ENCODE measurements at regions of chr1 and their contacts with region 1.

Region 1: GRCh38 chr1:248821101-248821500 is 4.6 kb downstream of the SH3BP5L start:
- DNase-seq: peak in 2 of 9 experiments; percentile 6 to 21
- ATAC-seq: no peak
- H3K4me3 ChIP-seq: no peak overlapping the region
- H3K4me3 Mint-ChIP-seq: no peak overlapping the region
- H3K27ac ChIP-seq: no peak overlapping the region
- H3K27ac Mint-ChIP-seq: no peak overlapping the region
- H3K4me1 ChIP-seq: peaks cover 70% of the 10 kb centered on the region
- H3K4me1 Mint-ChIP-seq: peaks cover 89% of the 10 kb centered on the region
- H3K27me3 ChIP-seq: no peaks in the 10 kb centered on the region
- H3K27me3 Mint-ChIP-seq: no peaks in the 10 kb centered on the region
- CTCF ChIP-seq: no peak

Region 2: GRCh38 chr1:247936415-247936814 is 884.7 kb before region 1 on chr1:
- CTCF ChIA-PET with region 1: no interaction called
- POLR2A ChIA-PET with region 1: no interaction called
- intact Hi-C with region 1: loop called in 1 of 2 experiments (anchors 5 kb)
- DNase-seq: peak in 1 of 9 experiments; percentile 2
- ATAC-seq: no peak
- H3K4me3 ChIP-seq: no peak overlapping the region
- H3K4me3 Mint-ChIP-seq: peak overlapping the region; percentile 88
- H3K27ac ChIP-seq: no peak overlapping the region
- H3K27ac Mint-ChIP-seq: no peak overlapping the region
- H3K4me1 ChIP-seq: no peaks in the 10 kb centered on the region
- H3K4me1 Mint-ChIP-seq: no peaks in the 10 kb centered on the region
- H3K27me3 ChIP-seq: no peaks in the 10 kb centered on the region
- H3K27me3 Mint-ChIP-seq: peaks cover 6% of the 10 kb centered on the region
- CTCF ChIP-seq: no peak

Region 3: DNA sequence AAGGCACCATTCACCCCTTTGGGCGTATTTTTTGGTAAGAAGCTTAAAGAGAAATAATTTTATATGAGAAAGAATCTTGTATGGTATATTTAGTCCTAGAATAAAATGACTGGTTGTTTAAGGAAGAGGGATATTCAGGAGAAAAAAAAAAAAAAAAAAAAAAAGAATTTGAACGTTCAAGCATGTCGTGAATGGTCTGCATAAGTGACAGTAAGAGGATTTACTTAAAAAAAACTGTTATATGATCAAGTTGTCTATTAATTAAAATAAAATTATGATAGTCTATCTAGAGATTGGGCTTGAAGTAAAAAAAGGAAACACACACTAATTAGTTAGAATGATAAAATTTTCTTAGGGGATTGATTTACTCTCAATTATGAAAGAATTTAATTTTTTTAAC is 106.9 kb before region 1 on chr1:
- CTCF ChIA-PET with region 1: no interaction called
- POLR2A ChIA-PET with region 1: no interaction called
- intact Hi-C with region 1: no loop called
- DNase-seq: no peak
- ATAC-seq: no peak
- H3K4me3 ChIP-seq: no peak overlapping the region
- H3K4me3 Mint-ChIP-seq: no peak overlapping the region
- H3K27ac ChIP-seq: no peak overlapping the region
- H3K27ac Mint-ChIP-seq: no peak overlapping the region
- H3K4me1 ChIP-seq: no peaks in the 10 kb centered on the region
- H3K4me1 Mint-ChIP-seq: no peaks in the 10 kb centered on the region
- H3K27me3 ChIP-seq: no peaks in the 10 kb centered on the region
- H3K27me3 Mint-ChIP-seq: peaks cover 14% of the 10 kb centered on the region
- CTCF ChIP-seq: no peak

Region 4: DNA sequence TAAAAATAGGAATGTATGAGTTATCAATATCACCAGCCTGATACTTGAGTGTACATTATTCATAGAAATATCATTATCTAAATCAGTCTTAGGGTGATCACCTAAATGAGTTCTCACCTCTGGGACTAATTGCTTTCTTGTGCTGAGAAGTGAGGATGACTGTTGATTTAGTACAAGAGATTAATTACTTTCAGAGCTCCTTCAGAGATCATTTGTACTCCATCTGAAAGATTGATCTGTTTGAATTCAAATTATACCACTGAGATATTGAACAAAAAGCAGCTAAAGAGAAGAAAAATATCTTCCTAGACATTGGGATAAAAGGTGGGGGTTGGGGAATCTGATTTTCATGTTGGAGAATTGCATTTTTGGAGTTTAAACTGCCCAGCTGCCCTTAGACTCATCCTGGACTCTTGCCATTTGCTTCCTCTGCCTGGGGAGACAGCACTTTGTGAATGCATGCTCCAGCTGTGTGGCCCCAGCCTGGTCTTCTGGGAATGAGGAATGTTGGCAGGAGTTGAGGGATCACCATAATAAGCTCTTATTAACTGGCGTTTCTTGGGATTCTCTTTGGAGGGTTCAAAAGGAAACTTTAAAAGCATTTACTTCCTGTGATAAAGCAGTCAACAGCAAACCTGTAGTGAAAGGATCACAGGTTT is 65.3 kb after region 1 on chr1:
- CTCF ChIA-PET with region 1: no interaction called
- POLR2A ChIA-PET with region 1: no interaction called
- intact Hi-C with region 1: no loop called
- DNase-seq: no peak
- ATAC-seq: no peak
- H3K4me3 ChIP-seq: no peak overlapping the region
- H3K4me3 Mint-ChIP-seq: no peak overlapping the region
- H3K27ac ChIP-seq: no peak overlapping the region
- H3K27ac Mint-ChIP-seq: no peak overlapping the region
- H3K4me1 ChIP-seq: no peaks in the 10 kb centered on the region
- H3K4me1 Mint-ChIP-seq: no peaks in the 10 kb centered on the region
- H3K27me3 ChIP-seq: peaks cover 0 to 7% of the 10 kb centered on the region in 2 experiments
- H3K27me3 Mint-ChIP-seq: peaks cover 11% of the 10 kb centered on the region
- CTCF ChIP-seq: no peak